ENCODE measurements at regions of chr2 and their contacts with region 1.

Region 1: GRCh38 chr2:118221666-118222594 is 133.7 kb downstream of the INSIG2 start:
- DNase-seq: peak; percentile 91
- ATAC-seq: peak; percentile 97
- H3K4me3 ChIP-seq: no peak overlapping the region
- H3K27ac ChIP-seq: no peak overlapping the region
- H3K4me1 ChIP-seq: peaks cover 4% of the 10 kb centered on the region; the same call in 1 of the 2 replicates
- H3K27me3 ChIP-seq: no peaks in the 10 kb centered on the region
- CTCF ChIP-seq: peak; percentile 87

Region 2: GRCh38 chr2:118269408-118270051 is 47.6 kb after region 1 on chr2:
- CTCF ChIA-PET with region 1: interaction called, 3 read pairs
- POLR2A ChIA-PET with region 1: no interaction called
- intact Hi-C with region 1: loop called (anchors 1 kb)
- DNase-seq: peak; percentile 60
- ATAC-seq: peak; percentile 88
- H3K4me3 ChIP-seq: no peak overlapping the region
- H3K27ac ChIP-seq: no peak overlapping the region
- H3K4me1 ChIP-seq: 0 out of 2 replicates have a peak, but pooled peaks cover 4% of the 10 kb centered on the region
- H3K27me3 ChIP-seq: no peaks in the 10 kb centered on the region
- CTCF ChIP-seq: peak; percentile 78

Region 3: DNA sequence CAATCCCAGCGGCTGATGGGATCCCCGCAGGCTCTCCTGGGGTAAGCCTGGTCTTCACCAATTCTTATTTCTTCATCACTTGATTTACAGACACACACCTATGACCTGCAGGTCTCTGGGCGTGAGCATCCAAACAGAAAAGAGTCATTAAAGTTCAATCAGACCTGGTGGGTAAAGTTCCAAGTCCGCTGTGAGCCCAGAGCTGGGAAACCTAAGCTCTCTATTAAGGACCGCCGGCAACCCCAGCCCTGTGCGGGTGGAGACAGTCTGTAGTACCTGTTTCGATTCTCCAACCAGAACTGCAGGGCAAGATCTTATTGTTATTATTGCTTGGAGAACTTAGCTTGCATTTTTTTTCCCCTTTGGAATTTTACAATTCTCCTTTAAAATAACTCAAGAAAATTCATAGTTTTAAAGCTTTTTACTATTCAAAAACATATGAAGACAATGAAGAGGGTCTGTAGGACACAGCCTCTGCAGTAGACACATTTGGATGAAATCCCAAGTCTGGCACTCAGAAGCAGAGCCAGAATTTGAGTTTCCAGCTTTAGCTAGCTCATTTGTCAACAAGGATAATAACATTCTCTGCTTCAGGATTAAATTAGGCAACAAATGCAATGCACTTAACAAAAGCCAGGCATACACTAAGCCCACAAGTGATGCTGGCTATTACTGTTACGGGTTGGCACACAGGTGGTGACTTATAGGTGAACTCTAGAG is 242.8 kb after region 1 on chr2:
- CTCF ChIA-PET with region 1: interaction called, 3 read pairs
- POLR2A ChIA-PET with region 1: no interaction called
- intact Hi-C with region 1: loop called (anchors 10 kb)
- DNase-seq: no peak
- ATAC-seq: no peak
- H3K4me3 ChIP-seq: no peak overlapping the region
- H3K27ac ChIP-seq: no peak overlapping the region
- H3K4me1 ChIP-seq: peaks cover 13% of the 10 kb centered on the region
- H3K27me3 ChIP-seq: peaks cover 5% of the 10 kb centered on the region; the same call in 1 of the 2 replicates
- CTCF ChIP-seq: no peak

Region 4: DNA sequence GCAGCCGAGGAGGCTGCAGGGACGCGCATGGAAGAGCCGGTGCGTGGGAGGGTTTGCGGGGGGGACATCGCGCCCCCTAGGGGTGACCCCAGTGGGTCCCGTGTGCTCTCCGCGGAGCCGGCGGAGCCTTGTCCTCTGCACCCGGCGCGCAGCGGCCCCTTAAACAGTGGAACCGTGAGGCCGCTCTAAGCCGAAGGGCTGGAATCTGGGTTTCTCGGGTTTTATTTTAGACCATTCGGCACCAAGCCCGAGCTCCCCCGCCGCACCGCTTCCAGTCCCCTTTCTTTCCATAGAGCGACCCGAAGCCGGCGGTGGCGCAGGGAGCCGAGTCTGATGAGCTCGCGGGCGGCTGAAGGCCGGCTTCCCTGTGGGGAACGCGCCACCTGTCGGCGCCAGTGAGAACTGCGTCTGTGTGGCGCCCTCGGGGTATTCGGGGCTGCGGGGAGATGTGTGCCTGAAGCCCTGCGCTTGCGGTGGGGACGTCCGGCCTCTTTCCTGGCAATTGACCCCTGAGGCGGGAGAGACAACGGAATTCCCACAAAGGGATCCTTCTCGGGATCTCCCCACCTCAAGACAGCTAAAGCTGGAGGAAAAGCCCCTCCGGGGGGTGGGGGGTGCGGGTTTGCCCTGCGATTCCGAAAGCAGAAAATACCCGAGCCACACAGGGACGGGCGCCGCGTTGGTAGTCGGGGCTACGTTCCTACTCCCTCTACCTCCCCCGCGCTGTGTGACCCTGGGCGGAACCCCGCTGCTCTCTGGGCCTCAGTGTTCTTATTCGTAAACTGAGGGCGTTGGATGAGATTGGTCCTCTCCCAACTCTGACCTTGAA is 633.7 kb after region 1 on chr2:
- CTCF ChIA-PET with region 1: interaction called, 3 read pairs
- POLR2A ChIA-PET with region 1: no interaction called
- intact Hi-C with region 1: loop called (anchors 1 kb)
- DNase-seq: peak; percentile 88
- ATAC-seq: peak; percentile 89
- H3K4me3 ChIP-seq: peak overlapping the region; percentile 72
- H3K27ac ChIP-seq: no peak overlapping the region
- H3K4me1 ChIP-seq: 0 out of 2 replicates have a peak, but pooled peaks cover under 1% of the 10 kb centered on the region
- H3K27me3 ChIP-seq: peaks cover 28% of the 10 kb centered on the region
- CTCF ChIP-seq: peak; percentile 89